IMR-90 (cell line): ENCODE measurements at regions of chr3 and their contacts with region 1.

Region 1: DNA sequence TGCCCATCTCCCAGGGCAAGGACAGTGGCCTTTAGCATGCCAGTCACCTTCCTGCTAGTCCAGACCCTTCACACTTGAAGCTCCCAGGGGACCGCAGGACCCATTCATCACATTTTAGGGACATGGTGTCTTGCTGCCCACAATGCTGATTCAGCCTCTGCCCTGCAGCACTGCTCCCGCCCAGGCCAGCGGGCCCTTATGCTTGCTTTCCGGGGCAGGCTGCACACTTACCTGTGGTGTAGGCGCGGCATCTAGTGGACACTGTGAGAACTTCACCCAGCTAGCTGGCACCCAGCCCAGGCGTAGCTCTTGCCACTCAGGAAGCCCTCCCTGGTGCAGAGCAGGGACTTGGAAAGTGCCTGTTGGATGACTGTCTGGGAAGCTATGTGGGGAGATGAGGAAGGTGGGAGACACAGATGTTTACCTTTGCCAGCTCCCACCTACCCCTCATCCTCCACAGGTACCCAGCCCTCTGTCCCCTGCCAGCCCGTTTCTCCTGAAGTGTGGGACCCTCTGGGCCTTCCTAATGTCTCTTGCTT is 26.2 kb upstream of the NR2C2 start:
- DNase-seq: peak; percentile 82
- ATAC-seq: peak; percentile 94
- H3K4me3 ChIP-seq: no peak overlapping the region
- H3K27ac ChIP-seq: no peak overlapping the region
- H3K4me1 ChIP-seq: peaks cover 2% of the 10 kb centered on the region; the same call in 1 of the 2 replicates
- H3K27me3 ChIP-seq: peaks cover 13% of the 10 kb centered on the region
- CTCF ChIP-seq: peak; percentile 95
- POLR2A ChIP-seq: no peak
- RAD21 ChIP-seq: peak; percentile 96

Region 2: GRCh38 chr3:13657660-13658435 is 1263.3 kb before region 1 on chr3:
- CTCF ChIA-PET with region 1: no interaction called
- POLR2A ChIA-PET with region 1: no interaction called
- dilution Hi-C with region 1: no loop called
- in situ Hi-C with region 1: no loop called
- intact Hi-C with region 1: loop called (anchors 5 kb)
- DNase-seq: peak; percentile 22
- ATAC-seq: peak; percentile 96
- H3K4me3 ChIP-seq: no peak overlapping the region
- H3K27ac ChIP-seq: no peak overlapping the region
- H3K4me1 ChIP-seq: no peaks in the 10 kb centered on the region
- H3K27me3 ChIP-seq: peaks cover 6% of the 10 kb centered on the region; the same call in 1 of the 2 replicates
- CTCF ChIP-seq: peak; percentile 75
- POLR2A ChIP-seq: no peak
- RAD21 ChIP-seq: peak; percentile 66

Region 3: DNA sequence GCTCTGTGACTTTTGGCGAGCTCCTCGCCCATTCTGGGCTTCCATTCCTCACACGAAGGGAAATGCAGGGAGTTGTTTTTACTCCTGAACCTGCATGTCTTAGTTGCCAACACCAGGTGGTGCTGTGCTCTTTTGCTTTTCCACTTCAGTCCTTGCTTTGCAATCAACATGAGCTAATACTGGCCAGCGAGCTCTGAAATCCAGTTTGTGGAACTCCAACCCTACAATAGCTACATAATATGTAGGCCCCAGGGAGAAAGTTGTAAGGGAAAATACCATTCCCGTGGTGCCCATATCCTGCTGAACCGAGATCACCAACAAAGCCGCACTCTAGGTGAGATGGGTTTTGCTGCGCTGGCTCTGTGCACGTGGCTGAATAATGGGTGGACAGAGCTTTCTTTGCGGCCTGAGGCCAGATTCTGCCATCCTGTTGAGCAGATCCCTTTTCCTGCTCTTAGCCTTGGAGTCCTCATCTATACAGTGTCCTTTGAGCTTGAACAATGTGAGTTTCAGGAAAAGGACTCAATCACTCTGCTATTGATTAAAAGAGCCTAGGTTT is 717.5 kb before region 1 on chr3:
- CTCF ChIA-PET with region 1: no interaction called
- POLR2A ChIA-PET with region 1: no interaction called
- dilution Hi-C with region 1: no loop called
- in situ Hi-C with region 1: no loop called
- intact Hi-C with region 1: loop called (anchors 5 kb)
- DNase-seq: peak; percentile 87
- ATAC-seq: peak; percentile 80
- H3K4me3 ChIP-seq: no peak overlapping the region
- H3K27ac ChIP-seq: peak overlapping the region; percentile 70; the same call in 1 of the 2 replicates
- H3K4me1 ChIP-seq: peaks cover 34% of the 10 kb centered on the region
- H3K27me3 ChIP-seq: no peaks in the 10 kb centered on the region
- CTCF ChIP-seq: peak; percentile 87
- POLR2A ChIP-seq: no peak
- RAD21 ChIP-seq: peak; percentile 94

Region 4: DNA sequence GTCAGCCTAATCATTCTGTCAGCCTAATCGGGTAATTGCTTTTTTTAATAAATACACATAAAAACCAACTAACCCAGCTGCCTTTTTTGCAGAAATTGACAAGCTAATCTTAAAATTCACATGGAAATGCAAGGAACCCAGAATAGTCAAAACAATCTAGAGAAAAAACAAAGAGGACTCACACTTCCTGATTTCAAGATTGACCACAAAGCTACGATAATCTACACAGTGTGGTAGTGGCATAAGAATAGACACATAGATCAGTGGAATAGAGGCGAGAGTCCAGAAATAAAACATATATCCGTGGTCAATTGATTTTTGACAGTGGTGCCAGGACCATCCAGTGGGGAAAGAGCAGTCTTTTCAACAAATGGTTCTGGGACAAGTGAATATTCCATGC is 248.6 kb before region 1 on chr3:
- CTCF ChIA-PET with region 1: interaction called, 30 read pairs
- POLR2A ChIA-PET with region 1: no interaction called
- dilution Hi-C with region 1: no loop called
- in situ Hi-C with region 1: loop called (anchors 5 kb)
- intact Hi-C with region 1: loop called (anchors 1 kb)
- DNase-seq: no peak
- ATAC-seq: no peak
- H3K4me3 ChIP-seq: no peak overlapping the region
- H3K27ac ChIP-seq: no peak overlapping the region
- H3K4me1 ChIP-seq: no peaks in the 10 kb centered on the region
- H3K27me3 ChIP-seq: no peaks in the 10 kb centered on the region
- CTCF ChIP-seq: no peak
- POLR2A ChIP-seq: no peak
- RAD21 ChIP-seq: no peak

Region 5: DNA sequence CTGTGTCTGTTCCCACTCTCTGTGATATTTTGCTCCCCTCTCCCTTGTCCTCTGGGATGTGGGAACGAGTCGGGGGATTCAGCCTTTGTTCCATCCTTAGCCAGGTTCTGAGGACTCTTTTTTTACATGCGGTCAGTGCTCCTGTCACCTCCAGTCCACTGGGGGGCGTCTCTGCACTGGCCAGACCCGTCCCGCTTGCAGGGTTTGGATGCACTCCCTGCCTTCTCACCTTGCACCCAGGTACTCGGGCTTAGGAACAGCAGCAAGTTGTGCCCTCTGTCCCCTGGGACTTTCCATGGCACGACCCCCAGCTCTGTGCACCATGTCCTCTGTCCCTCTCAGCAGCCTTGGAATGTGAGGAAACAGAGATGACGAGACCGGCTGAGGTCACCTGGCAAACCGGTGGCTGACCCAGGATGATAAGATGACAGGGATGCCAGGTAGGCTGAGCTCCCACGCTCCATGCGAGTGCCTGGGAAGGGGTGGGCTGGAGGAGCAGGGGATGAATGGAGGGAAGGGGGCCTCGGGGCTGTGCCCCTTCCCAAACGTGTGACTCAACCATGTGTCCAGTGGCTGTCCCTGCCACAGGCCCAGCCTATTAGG is 129.7 kb before region 1 on chr3:
- CTCF ChIA-PET with region 1: no interaction called
- POLR2A ChIA-PET with region 1: no interaction called
- dilution Hi-C with region 1: no loop called
- in situ Hi-C with region 1: no loop called
- intact Hi-C with region 1: loop called (anchors 1 kb)
- DNase-seq: peak; percentile 12
- ATAC-seq: peak; percentile 57
- H3K4me3 ChIP-seq: no peak overlapping the region
- H3K27ac ChIP-seq: no peak overlapping the region
- H3K4me1 ChIP-seq: no peaks in the 10 kb centered on the region
- H3K27me3 ChIP-seq: peaks cover 30% of the 10 kb centered on the region
- CTCF ChIP-seq: peak; percentile 41
- POLR2A ChIP-seq: no peak
- RAD21 ChIP-seq: peak; percentile 35

Region 6: DNA sequence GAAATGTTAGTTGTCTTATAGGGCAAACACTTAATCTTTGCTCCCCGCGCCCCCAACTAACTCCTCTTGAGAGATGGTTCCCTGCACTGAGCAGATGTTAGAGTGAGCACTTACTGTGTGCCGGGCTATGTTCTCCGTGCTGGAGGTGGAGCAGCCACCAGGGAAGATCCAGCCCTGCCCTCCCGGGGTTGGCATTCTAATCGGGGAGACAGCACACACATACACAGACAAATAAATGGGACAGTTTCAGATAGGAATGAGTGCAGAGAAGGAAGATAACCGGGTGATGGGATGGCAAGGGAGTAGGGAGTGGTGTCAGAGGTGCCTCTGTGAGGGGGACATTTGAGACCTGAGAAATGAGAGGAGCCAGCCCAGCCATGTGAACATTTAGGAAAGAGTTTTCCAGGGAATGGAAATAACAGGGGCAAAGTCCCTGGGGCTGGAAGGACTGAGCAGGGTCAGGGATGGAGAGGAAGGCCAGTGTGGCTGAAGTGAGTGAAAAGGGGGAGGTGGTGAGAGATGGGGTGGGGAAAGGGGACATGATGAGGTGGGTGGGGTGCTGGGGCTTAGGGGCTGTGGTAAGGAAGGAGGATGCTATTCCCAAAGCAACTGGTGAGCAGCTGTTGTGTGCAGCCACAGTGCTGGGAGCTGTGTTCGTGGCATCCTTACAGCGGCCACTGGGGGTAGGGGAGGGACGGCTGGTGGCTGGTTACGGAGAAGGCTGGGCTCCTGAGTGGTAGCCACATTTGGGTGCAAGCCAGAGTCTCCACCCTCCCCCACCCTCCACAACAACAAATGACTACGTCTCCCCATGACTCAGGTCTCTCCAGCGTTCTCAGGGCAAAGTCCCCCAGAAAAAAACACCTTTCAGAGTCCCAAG is 117.8 kb before region 1 on chr3:
- CTCF ChIA-PET with region 1: no interaction called
- POLR2A ChIA-PET with region 1: no interaction called
- dilution Hi-C with region 1: no loop called
- in situ Hi-C with region 1: no loop called
- intact Hi-C with region 1: no loop called
- DNase-seq: no peak
- ATAC-seq: no peak; the same call in 1 of the 2 replicates
- H3K4me3 ChIP-seq: no peak overlapping the region
- H3K27ac ChIP-seq: no peak overlapping the region
- H3K4me1 ChIP-seq: no peaks in the 10 kb centered on the region
- H3K27me3 ChIP-seq: peaks cover 27% of the 10 kb centered on the region
- CTCF ChIP-seq: no peak
- POLR2A ChIP-seq: no peak
- RAD21 ChIP-seq: no peak

Region 7: DNA sequence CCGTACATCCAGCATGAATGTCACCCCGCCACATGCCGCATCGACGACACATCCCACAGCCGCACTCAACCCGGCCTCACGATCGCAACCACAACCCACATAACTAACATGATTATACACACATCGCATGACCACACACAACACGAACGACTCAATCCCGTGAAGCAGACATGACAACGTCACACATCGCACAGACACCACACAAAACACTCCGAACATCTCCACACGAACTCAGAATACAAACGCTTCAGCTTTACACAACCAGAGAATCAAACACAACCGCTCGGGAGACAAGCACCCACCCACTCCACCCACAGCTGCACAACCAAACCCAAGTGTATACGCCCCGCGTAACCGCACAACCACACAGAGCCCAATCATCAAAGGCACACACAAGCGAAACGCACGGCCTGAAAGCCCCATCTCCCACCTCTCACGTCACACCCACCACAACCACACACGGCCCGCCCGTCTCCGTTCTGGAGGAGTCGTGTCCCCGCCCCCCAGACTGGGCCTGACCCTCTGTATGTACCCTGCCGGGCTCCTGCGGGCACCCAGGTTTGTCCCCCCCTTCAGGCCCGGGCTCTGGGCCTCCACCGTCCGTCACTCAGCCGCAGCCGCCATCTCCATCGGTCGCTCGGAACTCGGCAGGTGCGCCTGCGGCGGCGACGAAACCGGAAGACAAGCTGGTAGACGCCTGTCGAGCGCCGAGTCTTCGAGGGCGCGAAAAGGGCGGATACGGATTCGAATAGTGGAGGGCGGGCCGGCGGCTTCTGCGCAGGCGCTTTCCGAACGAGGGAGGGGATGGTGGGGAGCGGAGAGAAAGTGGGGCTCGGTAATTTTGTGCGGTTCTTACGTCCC is 177.6 kb after region 1 on chr3 and contains the start of gene RBSN:
- CTCF ChIA-PET with region 1: no interaction called
- POLR2A ChIA-PET with region 1: no interaction called
- dilution Hi-C with region 1: no loop called
- in situ Hi-C with region 1: no loop called
- intact Hi-C with region 1: loop called (anchors 5 kb)
- DNase-seq: peak; percentile 92
- ATAC-seq: peak; percentile 93
- H3K4me3 ChIP-seq: peak within 1 kb of the TSS; percentile 85
- H3K27ac ChIP-seq: peak within 1 kb of the TSS; percentile 86
- H3K4me1 ChIP-seq: peaks cover 9% of the 10 kb centered on the region
- H3K27me3 ChIP-seq: no peaks in the 10 kb centered on the region; the same call in 1 of the 2 replicates
- CTCF ChIP-seq: no peak
- POLR2A ChIP-seq: peak; percentile 69; the same call in 1 of the 2 replicates
- RAD21 ChIP-seq: no peak
- total RNA-seq, gene RBSN: 32.2 and 33.7 TPM in 2 replicates